ENCODE measurements at regions of chr3 and their contacts with region 1.

Region 1: DNA sequence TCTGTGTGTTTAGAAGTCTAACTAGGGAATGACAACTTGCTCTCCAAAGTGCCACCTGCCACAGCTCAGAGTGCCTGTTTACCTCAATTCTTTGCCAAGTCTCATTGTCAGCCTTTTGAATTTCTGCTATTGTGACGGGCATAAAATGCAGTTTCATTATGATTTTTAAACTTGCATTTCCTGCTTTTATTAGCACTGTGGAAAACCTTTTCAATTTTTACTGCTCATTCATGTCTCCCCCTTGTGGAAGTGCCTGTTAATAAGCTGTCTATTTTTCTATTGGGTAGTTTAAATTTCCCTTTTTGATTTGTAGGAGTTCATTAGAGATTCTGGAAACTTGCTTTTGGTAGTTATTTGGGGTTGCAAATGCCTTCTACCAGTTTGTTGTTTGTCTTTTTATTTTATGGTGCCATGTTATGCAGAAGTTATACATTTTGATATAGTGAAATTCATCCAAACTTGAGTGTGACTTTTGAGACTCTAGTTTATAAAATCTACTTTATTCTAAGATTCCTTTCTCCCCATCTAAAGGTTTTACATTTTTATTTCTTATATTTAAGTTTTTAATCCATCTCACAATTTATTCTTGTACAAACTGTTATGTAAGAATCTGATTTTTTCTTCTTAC is 53.9 kb upstream of the FRMD4B start:
- DNase-seq: no peak
- ATAC-seq: no peak
- H3K4me3 ChIP-seq: no peak overlapping the region
- H3K27ac ChIP-seq: no peak overlapping the region
- H3K4me1 ChIP-seq: no peaks in the 10 kb centered on the region
- H3K27me3 ChIP-seq: no peaks in the 10 kb centered on the region
- CTCF ChIP-seq: peak; percentile 49

Region 2: GRCh38 chr3:69671082-69671952 is 231.6 kb after region 1 on chr3:
- intact Hi-C with region 1: loop called in 1 of 2 experiments (anchors 10 kb)
- DNase-seq: no peak
- ATAC-seq: peak in 1 of 4 donors; percentile 59
- H3K4me3 ChIP-seq: no peak overlapping the region
- H3K27ac ChIP-seq: no peak overlapping the region
- H3K4me1 ChIP-seq: no peaks in the 10 kb centered on the region
- H3K27me3 ChIP-seq: no peaks in the 10 kb centered on the region
- CTCF ChIP-seq: peak; percentile 74

Measured in psoas muscle (tissue), 8 donors.